H1 (cell line): ENCODE measurements at regions of chr2 and their contacts with region 1.

Region 1: GRCh38 chr2:191691016-191691735 is 13.2 kb downstream of the NABP1 start:
- DNase-seq: no peak
- H3K4me3 ChIP-seq: no peak overlapping the region
- H3K27ac ChIP-seq: no peak overlapping the region
- H3K4me1 ChIP-seq: no peaks in the 10 kb centered on the region
- H3K27me3 ChIP-seq: no peaks in the 10 kb centered on the region
- CTCF ChIP-seq: peak in 2 of 3 experiments; percentile 68 to 81; a peak in 3 of 4 replicates
- EP300 ChIP-seq: no peak
- POLR2A ChIP-seq: no peak
- RAD21 ChIP-seq: peak; percentile 69 to 79

Region 2: GRCh38 chr2:191555092-191555742 is 136.0 kb before region 1 on chr2:
- CTCF ChIA-PET with region 1: interaction called, 13 read pairs
- POLR2A ChIA-PET with region 1: no interaction called
- DNase-seq: peak; percentile 44 to 91
- H3K4me3 ChIP-seq: no peak overlapping the region
- H3K27ac ChIP-seq: no peak overlapping the region
- H3K4me1 ChIP-seq: no peaks in the 10 kb centered on the region
- H3K27me3 ChIP-seq: no peaks in the 10 kb centered on the region
- CTCF ChIP-seq: peak; percentile 61 to 78 (median 78)
- EP300 ChIP-seq: no peak
- POLR2A ChIP-seq: no peak
- RAD21 ChIP-seq: peak; percentile 88 to 90

Region 3: DNA sequence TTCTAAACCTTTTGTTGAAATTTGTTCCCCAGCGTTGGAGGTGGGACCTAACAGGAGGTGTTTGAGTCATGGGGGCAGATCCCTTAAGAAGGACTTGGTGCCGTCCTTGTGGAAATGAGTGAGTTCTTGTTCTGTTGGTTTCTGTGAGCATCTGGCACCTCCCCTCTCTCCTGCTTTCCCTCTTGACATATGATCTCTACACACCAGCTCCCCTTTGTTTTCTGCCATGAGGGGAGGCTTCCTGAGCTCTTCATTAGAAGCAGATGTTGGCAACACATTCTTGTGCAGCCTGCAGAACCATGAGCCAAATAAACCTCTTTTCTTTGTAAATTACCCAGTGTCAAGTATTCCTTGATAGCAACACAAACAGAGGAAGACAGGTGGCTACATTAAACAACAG is 10.5 kb after region 1 on chr2:
- CTCF ChIA-PET with region 1: interaction called, 12 read pairs
- POLR2A ChIA-PET with region 1: no interaction called
- DNase-seq: no peak
- H3K4me3 ChIP-seq: no peak overlapping the region
- H3K27ac ChIP-seq: no peak overlapping the region
- H3K4me1 ChIP-seq: no peaks in the 10 kb centered on the region
- H3K27me3 ChIP-seq: no peaks in the 10 kb centered on the region
- CTCF ChIP-seq: no peak
- EP300 ChIP-seq: no peak
- POLR2A ChIP-seq: no peak
- RAD21 ChIP-seq: no peak

Region 4: DNA sequence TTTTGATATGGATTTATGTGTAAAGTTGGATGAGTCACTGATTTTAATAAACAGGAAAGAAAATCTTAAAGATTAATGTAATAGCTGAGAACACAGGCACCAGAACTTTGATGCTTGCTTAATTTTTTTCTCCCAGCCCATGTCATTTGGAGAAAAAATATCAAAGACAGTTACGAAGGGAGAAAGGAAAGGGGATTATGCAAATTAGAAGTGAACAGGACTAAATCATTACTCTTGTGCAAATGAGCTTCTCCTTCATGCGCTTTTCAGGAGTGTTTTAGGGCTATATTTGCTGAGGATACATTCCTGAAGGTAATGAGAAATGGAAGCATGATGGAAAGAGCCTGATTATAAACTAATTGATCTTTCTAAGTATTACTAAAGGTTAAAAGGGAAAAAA is 15.6 kb after region 1 on chr2:
- CTCF ChIA-PET with region 1: interaction called, 12 read pairs
- POLR2A ChIA-PET with region 1: no interaction called
- DNase-seq: no peak
- H3K4me3 ChIP-seq: no peak overlapping the region
- H3K27ac ChIP-seq: no peak overlapping the region
- H3K4me1 ChIP-seq: no peaks in the 10 kb centered on the region
- H3K27me3 ChIP-seq: no peaks in the 10 kb centered on the region
- CTCF ChIP-seq: no peak
- EP300 ChIP-seq: no peak
- POLR2A ChIP-seq: no peak
- RAD21 ChIP-seq: no peak